ENCODE measurements at regions of chr9 and their contacts with region 1.

Region 1: GRCh38 chr9:96217754-96218693 is 84.0 kb downstream of the HSD17B3 start:
- DNase-seq: peak; percentile 78
- H3K4me3 Mint-ChIP-seq: peak overlapping the region; percentile 58
- H3K27ac Mint-ChIP-seq: no peak overlapping the region
- H3K4me1 Mint-ChIP-seq: no peaks in the 10 kb centered on the region
- H3K27me3 Mint-ChIP-seq: peaks cover 39% of the 10 kb centered on the region
- CTCF ChIP-seq: peak; percentile 93

Region 2: GRCh38 chr9:95726756-95727155 is 491.3 kb before region 1 on chr9:
- CTCF ChIA-PET with region 1: interaction called, 3 read pairs
- intact Hi-C with region 1: loop called (anchors 5 kb)
- DNase-seq: no peak
- H3K4me3 Mint-ChIP-seq: no peak overlapping the region
- H3K27ac Mint-ChIP-seq: no peak overlapping the region
- H3K4me1 Mint-ChIP-seq: no peaks in the 10 kb centered on the region
- H3K27me3 Mint-ChIP-seq: peaks cover 30% of the 10 kb centered on the region
- CTCF ChIP-seq: no peak

Region 3: GRCh38 chr9:96177005-96177718 is 40.9 kb before region 1 on chr9:
- CTCF ChIA-PET with region 1: no interaction called
- intact Hi-C with region 1: no loop called
- DNase-seq: no peak
- H3K4me3 Mint-ChIP-seq: no peak overlapping the region
- H3K27ac Mint-ChIP-seq: no peak overlapping the region
- H3K4me1 Mint-ChIP-seq: peaks cover 20% of the 10 kb centered on the region
- H3K27me3 Mint-ChIP-seq: peaks cover 26% of the 10 kb centered on the region
- CTCF ChIP-seq: no peak

Measured in Calu3 (cell line).